CD4-positive, alpha-beta memory T cell (primary cell): ENCODE measurements at regions of chr3 and their contacts with region 1.

Region 1: GRCh38 chr3:49171119-49171774 is at the start of gene KLHDC8B:
- DNase-seq: peak; percentile 74 to 77 (median 76)
- H3K4me3 ChIP-seq: peak within 1 kb of the TSS; percentile 57 to 72
- H3K4me3 Mint-ChIP-seq: peak within 1 kb of the TSS; percentile 85 to 90 (median 88)
- H3K27ac ChIP-seq: peak within 1 kb of the TSS; percentile 32
- H3K27ac Mint-ChIP-seq: peak within 1 kb of the TSS; percentile 51 to 85 (median 66)
- H3K4me1 ChIP-seq: peaks cover 21% of the 10 kb centered on the region
- H3K4me1 Mint-ChIP-seq: peaks cover 6 to 30% (median 16%) of the 10 kb centered on the region in 4 donors
- H3K27me3 ChIP-seq: no peaks in the 10 kb centered on the region
- H3K27me3 Mint-ChIP-seq: no peaks in the 10 kb centered on the region
- total RNA-seq, gene KLHDC8B: 1.9 to 2.0 TPM

Region 2: DNA sequence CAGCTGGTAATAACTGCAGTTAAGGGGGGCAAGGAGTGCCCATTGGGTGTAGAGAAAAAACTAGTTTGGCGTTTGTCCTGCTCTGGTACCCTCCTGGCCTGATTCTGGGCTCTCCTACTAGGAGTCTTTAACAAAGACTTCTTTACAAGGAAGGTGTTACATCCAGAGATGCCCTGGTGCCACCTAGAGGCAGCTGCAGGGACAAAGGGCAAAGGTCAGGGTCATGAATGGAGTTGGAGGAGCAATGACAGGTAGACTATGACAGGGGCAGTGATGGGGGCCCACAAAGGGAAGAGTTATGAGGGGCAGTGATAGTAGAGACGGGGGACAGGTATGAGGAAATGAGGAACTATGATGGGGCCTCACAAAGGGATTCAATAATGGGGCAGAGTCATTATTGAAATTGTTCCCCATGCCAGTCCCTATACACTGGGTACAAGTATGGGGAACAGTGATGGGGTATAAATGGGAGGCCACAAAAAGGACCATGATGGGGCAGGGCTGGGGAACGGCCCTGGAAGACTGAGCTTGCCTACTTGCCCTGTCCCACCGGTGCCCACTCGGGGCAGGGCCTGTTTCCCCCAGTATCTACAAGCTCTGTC is 13.0 kb before region 1 on chr3:
- CTCF ChIA-PET with region 1: interaction called, 27 read pairs
- POLR2A ChIA-PET with region 1: interaction called, 8 read pairs
- intact Hi-C with region 1: no loop called
- DNase-seq: peak; percentile 54 to 77 (median 63)
- H3K4me3 ChIP-seq: no peak overlapping the region
- H3K4me3 Mint-ChIP-seq: no peak overlapping the region
- H3K27ac ChIP-seq: no peak overlapping the region
- H3K27ac Mint-ChIP-seq: peak overlapping the region; percentile 8 to 91 (median 64)
- H3K4me1 ChIP-seq: no peaks in the 10 kb centered on the region
- H3K4me1 Mint-ChIP-seq: peaks cover 2 to 11% (median 5%) of the 10 kb centered on the region in 4 donors
- H3K27me3 ChIP-seq: no peaks in the 10 kb centered on the region
- H3K27me3 Mint-ChIP-seq: no peaks in the 10 kb centered on the region

Region 3: GRCh38 chr3:49276475-49277382 is 105.5 kb after region 1 on chr3 and contains the start of gene C3orf62:
- CTCF ChIA-PET with region 1: interaction called, 11 read pairs
- POLR2A ChIA-PET with region 1: no interaction called
- intact Hi-C with region 1: loop called (anchors 5 kb)
- DNase-seq: peak; percentile 56 to 72 (median 61)
- H3K4me3 ChIP-seq: peak within 1 kb of the TSS; percentile 44 to 67
- H3K4me3 Mint-ChIP-seq: peak within 1 kb of the TSS; percentile 78 to 90 (median 87)
- H3K27ac ChIP-seq: peak within 1 kb of the TSS; percentile 67
- H3K27ac Mint-ChIP-seq: peak within 1 kb of the TSS; percentile 77 to 94 (median 90)
- H3K4me1 ChIP-seq: peaks cover 17% of the 10 kb centered on the region
- H3K4me1 Mint-ChIP-seq: peaks cover 10 to 22% (median 19%) of the 10 kb centered on the region in 4 donors
- H3K27me3 ChIP-seq: no peaks in the 10 kb centered on the region
- H3K27me3 Mint-ChIP-seq: no peaks in the 10 kb centered on the region
- total RNA-seq, gene C3orf62: 9.8 to 9.9 TPM

Region 4: DNA sequence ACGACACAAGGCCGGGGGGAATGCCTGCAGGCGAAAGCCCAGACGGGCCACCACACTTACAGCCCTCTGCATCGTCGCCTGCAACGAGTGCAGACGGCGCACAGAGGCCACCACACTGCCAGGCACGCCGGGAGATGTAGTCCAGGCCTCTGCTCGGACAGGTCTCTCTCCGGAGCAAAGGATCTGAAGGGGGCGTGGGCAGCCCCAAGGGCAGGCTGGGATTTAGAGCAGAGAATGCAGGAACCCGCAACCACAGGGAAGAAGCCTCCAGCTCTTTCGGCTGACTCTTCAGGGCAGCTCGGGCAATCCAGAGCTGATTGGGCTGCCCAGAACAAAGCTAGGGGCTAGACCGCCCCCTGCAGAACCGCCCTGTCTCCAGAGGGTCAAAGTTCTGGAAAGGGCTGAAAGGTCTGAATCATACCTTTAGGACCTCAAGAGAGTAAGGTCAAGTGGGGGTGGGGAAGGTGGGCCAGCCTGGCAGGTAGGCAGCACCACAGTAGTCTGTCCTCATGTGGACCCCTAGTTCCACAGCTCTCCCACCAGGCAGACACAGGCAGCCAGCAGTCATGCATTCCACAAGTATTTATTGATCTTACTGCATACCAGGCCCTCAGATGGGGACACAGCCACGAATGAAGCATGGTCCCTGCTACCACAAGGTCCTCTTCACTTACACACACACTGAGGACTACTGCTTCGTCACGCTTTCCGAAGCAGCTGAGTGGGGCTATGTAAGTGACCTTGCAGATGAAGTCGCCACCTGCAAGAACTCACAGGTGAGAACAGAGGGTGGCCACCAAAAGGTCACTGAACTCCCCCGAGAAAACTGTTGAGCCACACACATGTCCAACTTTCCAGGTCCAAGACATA is 251.4 kb after region 1 on chr3 and contains the start of gene AMT:
- CTCF ChIA-PET with region 1: no interaction called
- POLR2A ChIA-PET with region 1: no interaction called
- intact Hi-C with region 1: no loop called
- DNase-seq: no peak
- H3K4me3 ChIP-seq: no peak within 1 kb of the TSS
- H3K4me3 Mint-ChIP-seq: peak within 1 kb of the TSS in 1 of 8 donors; percentile 35
- H3K27ac ChIP-seq: no peak within 1 kb of the TSS
- H3K27ac Mint-ChIP-seq: peak within 1 kb of the TSS in 5 of 7 donors; percentile 29 to 83 (median 61)
- H3K4me1 ChIP-seq: peaks cover 13% of the 10 kb centered on the region
- H3K4me1 Mint-ChIP-seq: peaks cover 18 to 50% (median 33%) of the 10 kb centered on the region in 4 donors
- H3K27me3 ChIP-seq: no peaks in the 10 kb centered on the region
- H3K27me3 Mint-ChIP-seq: no peaks in the 10 kb centered on the region
- total RNA-seq, gene AMT: 6.4 to 7.6 TPM

Region 5: DNA sequence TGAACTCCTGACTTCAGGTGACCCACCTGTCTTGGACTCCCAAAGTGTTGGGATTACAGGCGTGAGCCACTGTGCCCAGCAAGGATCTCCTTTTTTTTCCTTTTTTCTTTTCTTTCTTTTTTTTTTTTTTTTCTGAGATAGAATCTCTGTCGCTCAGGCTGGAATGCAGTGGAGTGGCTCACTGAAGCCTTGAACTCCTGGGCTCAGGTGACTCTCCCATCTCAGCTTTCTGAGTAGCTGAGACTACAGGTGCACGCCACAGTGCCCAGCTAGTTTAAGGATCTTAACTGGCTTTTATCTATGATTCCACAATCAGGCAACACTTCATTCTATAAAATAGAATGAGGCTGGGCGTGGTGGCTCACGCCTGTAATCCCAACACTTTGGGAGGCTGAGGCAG is 274.1 kb after region 1 on chr3:
- CTCF ChIA-PET with region 1: interaction called, 21 read pairs
- POLR2A ChIA-PET with region 1: no interaction called
- intact Hi-C with region 1: loop called (anchors 1 kb)
- DNase-seq: no peak
- H3K4me3 ChIP-seq: no peak overlapping the region
- H3K4me3 Mint-ChIP-seq: no peak overlapping the region
- H3K27ac ChIP-seq: no peak overlapping the region
- H3K27ac Mint-ChIP-seq: peak overlapping the region in 4 of 7 donors; percentile 61 to 82 (median 72)
- H3K4me1 ChIP-seq: peaks cover 20% of the 10 kb centered on the region
- H3K4me1 Mint-ChIP-seq: peaks cover 8 to 18% (median 11%) of the 10 kb centered on the region in 4 donors
- H3K27me3 ChIP-seq: no peaks in the 10 kb centered on the region
- H3K27me3 Mint-ChIP-seq: no peaks in the 10 kb centered on the region

Region 6: DNA sequence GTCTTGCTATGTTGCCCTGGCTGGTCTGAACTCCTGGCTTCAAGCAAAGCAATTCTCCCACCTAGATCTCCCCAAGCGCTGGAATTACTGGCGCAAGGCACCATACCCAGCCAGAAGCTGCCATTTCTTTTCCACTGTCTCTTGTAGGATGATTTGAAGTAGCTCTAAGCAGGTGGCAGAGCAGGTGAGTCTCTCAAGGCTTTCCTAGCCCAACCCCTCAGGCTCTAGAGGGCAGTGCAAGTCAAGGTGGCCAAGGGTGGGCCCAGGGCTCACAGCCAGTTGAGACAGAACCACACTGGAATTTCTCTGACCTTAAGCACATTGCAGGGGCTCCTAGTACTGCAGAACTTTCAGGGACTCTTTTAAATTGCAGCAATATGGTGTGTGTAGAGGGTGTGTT is 283.2 kb after region 1 on chr3:
- CTCF ChIA-PET with region 1: interaction called, 21 read pairs
- POLR2A ChIA-PET with region 1: no interaction called
- intact Hi-C with region 1: loop called (anchors 1 kb)
- DNase-seq: no peak
- H3K4me3 ChIP-seq: no peak overlapping the region
- H3K4me3 Mint-ChIP-seq: no peak overlapping the region
- H3K27ac ChIP-seq: no peak overlapping the region
- H3K27ac Mint-ChIP-seq: peak overlapping the region in 2 of 7 donors; percentile 19 to 60
- H3K4me1 ChIP-seq: no peaks in the 10 kb centered on the region
- H3K4me1 Mint-ChIP-seq: no peaks in the 10 kb centered on the region
- H3K27me3 ChIP-seq: no peaks in the 10 kb centered on the region
- H3K27me3 Mint-ChIP-seq: peaks cover 0 to 3% of the 10 kb centered on the region in 2 donors